Esophagus muscularis mucosa (tissue), 4 donors: ENCODE measurements at regions of chr9 and their contacts with region 1.

Region 1: GRCh38 chr9:34611829-34612630 is at the start of gene RPP25L:
- DNase-seq: no peak
- H3K4me3 ChIP-seq: peak within 1 kb of the TSS; percentile 71 to 74 (median 72)
- H3K27ac ChIP-seq: peak within 1 kb of the TSS; percentile 84 to 87 (median 85)
- H3K4me1 ChIP-seq: peaks cover 18 to 29% (median 27%) of the 10 kb centered on the region in 4 donors
- H3K27me3 ChIP-seq: no peaks in the 10 kb centered on the region
- CTCF ChIP-seq: no peak
- EP300 ChIP-seq: no peak
- POLR2A ChIP-seq: peak; percentile 61
- total RNA-seq, gene RPP25L: 11.6 to 26.7 (median 20.2) TPM

Region 2: GRCh38 chr9:34458013-34458958 is 153.7 kb before region 1 on chr9 and contains the starts of genes DNAI1 and FAM219A:
- intact Hi-C with region 1: loop called (anchors 5 kb)
- DNase-seq: peak; percentile 99
- H3K4me3 ChIP-seq: peak within 1 kb of the TSS; percentile 82 to 83 (median 82)
- H3K27ac ChIP-seq: peak within 1 kb of the TSS; percentile 83 to 93 (median 87)
- H3K4me1 ChIP-seq: peaks cover 39 to 49% (median 48%) of the 10 kb centered on the region in 4 donors
- H3K27me3 ChIP-seq: no peaks in the 10 kb centered on the region
- CTCF ChIP-seq: no peak
- EP300 ChIP-seq: no peak
- POLR2A ChIP-seq: peak; percentile 81
- total RNA-seq, gene DNAI1: not detected
- total RNA-seq, gene FAM219A: 12.6 to 19.2 (median 17.0) TPM

Region 3: GRCh38 chr9:34633851-34634550 is 22.0 kb after region 1 on chr9:
- intact Hi-C with region 1: loop called (anchors 2 kb)
- DNase-seq: no peak
- H3K4me3 ChIP-seq: no peak overlapping the region
- H3K27ac ChIP-seq: no peak overlapping the region
- H3K4me1 ChIP-seq: peaks cover 23 to 42% (median 40%) of the 10 kb centered on the region in 4 donors
- H3K27me3 ChIP-seq: peaks cover 0 to 16% (median 6%) of the 10 kb centered on the region in 4 donors
- CTCF ChIP-seq: peak; percentile 82 to 84 (median 84)
- EP300 ChIP-seq: no peak
- POLR2A ChIP-seq: no peak